HepG2 (cell line): ENCODE measurements at regions of chr5 and their contacts with region 1.

Region 1: DNA sequence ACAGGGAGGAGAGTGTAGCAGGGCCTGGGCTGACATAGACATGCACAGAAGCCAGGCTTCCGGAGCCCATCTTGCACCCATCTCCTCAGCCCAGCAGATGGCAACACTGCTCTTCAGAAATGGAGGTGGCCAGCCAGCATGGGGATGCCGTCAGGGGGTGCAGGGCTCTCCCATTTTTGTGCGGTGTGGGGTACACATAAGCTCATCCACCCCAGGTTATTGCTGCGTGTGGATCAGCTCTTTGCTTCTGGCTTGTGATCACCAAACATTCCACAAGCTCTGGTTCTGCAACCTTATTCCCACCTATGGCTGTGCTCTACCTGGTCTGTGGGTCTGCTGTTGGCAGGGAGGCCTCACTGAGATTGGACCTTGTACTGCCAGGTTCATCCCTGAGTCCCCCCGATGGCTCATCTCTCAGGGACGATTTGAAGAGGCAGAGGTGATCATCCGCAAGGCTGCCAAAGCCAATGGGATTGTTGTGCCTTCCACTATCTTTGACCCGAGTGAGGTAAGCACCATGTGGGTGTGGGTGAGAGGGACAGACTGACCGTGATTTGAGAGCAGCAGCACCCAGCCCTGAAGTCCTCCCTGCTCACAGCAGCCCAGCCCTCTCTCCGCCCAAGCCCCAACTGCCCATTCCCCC is 17.3 kb downstream of the SLC22A5 start:
- DNase-seq: peak; percentile 56
- ATAC-seq: peak; percentile 93
- H3K4me3 ChIP-seq: no peak overlapping the region
- H3K27ac ChIP-seq: no peak overlapping the region
- H3K4me1 ChIP-seq: peaks cover 44% of the 10 kb centered on the region
- H3K27me3 ChIP-seq: no peaks in the 10 kb centered on the region
- CTCF ChIP-seq: peak; percentile 97
- EP300 ChIP-seq: no peak
- POLR2A ChIP-seq: no peak
- RAD21 ChIP-seq: peak; percentile 95

Region 2: DNA sequence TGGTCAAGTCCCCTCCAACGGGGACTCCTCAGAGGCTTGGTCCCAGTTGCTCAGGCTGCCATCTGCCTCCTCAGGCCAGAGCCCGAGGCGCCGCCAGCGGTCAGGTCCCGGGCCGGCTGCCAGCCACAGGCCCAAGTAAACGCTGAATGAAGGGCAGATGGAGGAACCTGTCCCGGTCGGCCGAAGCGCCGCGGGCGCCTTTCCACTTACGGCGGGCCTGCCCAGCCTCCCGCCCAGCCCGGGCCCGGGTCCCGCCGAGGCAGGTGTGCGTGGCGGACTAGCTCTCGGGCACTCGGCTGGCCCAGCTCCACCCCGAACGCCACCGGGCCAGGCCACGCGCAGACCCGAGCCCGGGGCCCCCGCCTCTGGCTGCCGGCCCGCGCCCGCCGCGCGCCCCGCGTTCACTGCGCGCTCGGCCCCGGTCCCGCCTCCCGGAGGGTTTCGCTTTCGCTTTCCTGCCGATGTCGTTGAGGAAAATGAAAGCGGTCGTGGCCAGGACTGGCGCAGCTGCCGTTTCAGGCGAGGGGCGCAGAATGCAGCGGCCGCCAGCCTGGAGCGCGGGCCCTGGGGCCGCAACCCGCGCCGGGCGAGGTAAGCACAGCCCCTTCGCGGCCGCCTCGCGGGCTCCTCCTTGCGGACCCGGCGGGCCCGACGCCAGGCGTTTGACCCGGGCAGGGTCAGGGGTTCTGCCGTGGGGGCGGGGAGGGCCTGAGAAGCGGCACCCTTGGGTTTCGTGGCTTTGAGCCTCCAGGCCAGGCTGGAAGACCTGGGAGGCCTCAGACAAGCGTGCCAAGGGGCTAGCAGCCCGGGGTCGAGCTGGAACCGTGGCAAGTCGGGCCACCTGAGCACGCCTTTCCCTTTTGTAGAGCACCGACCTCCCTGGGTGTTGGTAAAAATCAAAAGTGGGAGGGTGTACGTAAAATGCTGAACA is 24.0 kb after region 1 on chr5:
- CTCF ChIA-PET with region 1: interaction called, 25 read pairs
- POLR2A ChIA-PET with region 1: interaction called, 4 read pairs
- in situ Hi-C with region 1: no loop called
- intact Hi-C with region 1: loop called (anchors 2 kb)
- DNase-seq: peak; percentile 60
- ATAC-seq: peak; percentile 93
- H3K4me3 ChIP-seq: peak overlapping the region; percentile 63 to 81 (median 74)
- H3K27ac ChIP-seq: peak overlapping the region; percentile 88
- H3K4me1 ChIP-seq: peaks cover 67% of the 10 kb centered on the region
- H3K27me3 ChIP-seq: no peaks in the 10 kb centered on the region; a peak in 1 of 5 replicates
- CTCF ChIP-seq: peak; percentile 80
- EP300 ChIP-seq: peak in 1 of 2 experiments; percentile 24; a peak in 1 of 4 replicates
- POLR2A ChIP-seq: peak; percentile 70 to 77
- RAD21 ChIP-seq: peak; percentile 91

Region 3: GRCh38 chr5:132484391-132484725 is 97.6 kb after region 1 on chr5:
- CTCF ChIA-PET with region 1: no interaction called
- POLR2A ChIA-PET with region 1: no interaction called
- in situ Hi-C with region 1: no loop called
- intact Hi-C with region 1: no loop called
- DNase-seq: no peak
- ATAC-seq: no peak
- H3K4me3 ChIP-seq: no peak overlapping the region
- H3K27ac ChIP-seq: no peak overlapping the region
- H3K4me1 ChIP-seq: peaks cover 25% of the 10 kb centered on the region
- H3K27me3 ChIP-seq: no peaks in the 10 kb centered on the region
- CTCF ChIP-seq: no peak
- EP300 ChIP-seq: no peak
- POLR2A ChIP-seq: no peak
- RAD21 ChIP-seq: no peak